ENCODE measurements at regions of chr3 and their contacts with region 1.

Region 1: DNA sequence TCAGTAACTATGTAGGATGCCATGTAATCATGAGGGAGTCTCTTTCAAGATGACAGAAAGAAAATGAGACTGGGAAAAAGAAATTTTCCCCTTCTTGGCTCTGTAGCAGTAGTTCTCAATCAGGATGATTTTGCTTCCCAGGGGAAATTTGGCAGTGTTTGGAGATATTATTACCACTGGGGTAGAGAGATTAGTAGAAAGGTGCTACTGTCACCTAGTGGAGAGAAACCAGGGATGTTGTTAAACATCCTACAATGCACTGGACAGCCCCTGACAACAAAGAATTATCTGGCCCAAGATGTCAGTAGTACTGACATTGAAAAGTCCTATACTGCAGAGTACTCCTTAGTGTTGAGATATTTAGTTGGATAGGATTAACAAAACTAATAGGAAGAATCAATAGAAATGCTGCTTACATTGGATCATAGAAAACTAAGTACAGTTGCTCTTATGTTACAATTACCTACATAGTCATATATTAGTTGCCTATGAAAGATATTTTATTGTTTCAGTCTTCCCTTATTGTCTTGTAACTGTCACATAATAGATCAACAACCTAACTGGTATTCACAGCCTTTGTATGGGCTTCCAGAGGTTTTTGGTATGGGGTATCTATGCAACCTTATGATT is 433.3 kb downstream of the RAP2B start:
- DNase-seq: peak; percentile 45
- H3K4me3 ChIP-seq: no peak overlapping the region
- H3K27ac ChIP-seq: no peak overlapping the region
- H3K4me1 ChIP-seq: peaks cover 18% of the 10 kb centered on the region
- H3K27me3 ChIP-seq: no peaks in the 10 kb centered on the region
- CTCF ChIP-seq: peak; percentile 78 to 96

Region 2: DNA sequence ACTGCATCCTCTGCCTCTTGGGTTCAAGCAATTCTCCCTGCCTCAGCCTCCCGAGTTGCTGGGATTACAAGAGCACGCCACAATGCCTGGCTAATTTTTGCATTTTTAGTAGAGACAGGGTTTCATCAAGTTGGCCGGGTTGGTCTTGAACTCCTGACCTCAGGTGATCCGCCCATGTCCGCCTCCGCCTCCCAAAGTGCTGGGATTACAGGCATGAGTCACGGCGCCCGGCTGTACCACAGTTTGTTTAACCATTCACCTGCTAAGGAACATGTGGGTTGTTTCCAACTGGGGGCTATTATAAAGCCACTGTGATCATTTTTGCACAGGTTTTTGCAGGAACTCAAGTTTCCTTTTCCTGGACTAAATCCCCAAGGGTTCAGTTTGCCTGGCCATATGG is 556.5 kb before region 1 on chr3:
- CTCF ChIA-PET with region 1: no interaction called
- dilution Hi-C with region 1: no loop called
- in situ Hi-C with region 1: loop called in 1 of 2 experiments (anchors 10 kb)
- intact Hi-C with region 1: loop called (anchors 1 kb)
- DNase-seq: peak; percentile 56
- H3K4me3 ChIP-seq: no peak overlapping the region
- H3K27ac ChIP-seq: no peak overlapping the region
- H3K4me1 ChIP-seq: peaks cover 18% of the 10 kb centered on the region
- H3K27me3 ChIP-seq: no peaks in the 10 kb centered on the region
- CTCF ChIP-seq: no peak

Region 3: DNA sequence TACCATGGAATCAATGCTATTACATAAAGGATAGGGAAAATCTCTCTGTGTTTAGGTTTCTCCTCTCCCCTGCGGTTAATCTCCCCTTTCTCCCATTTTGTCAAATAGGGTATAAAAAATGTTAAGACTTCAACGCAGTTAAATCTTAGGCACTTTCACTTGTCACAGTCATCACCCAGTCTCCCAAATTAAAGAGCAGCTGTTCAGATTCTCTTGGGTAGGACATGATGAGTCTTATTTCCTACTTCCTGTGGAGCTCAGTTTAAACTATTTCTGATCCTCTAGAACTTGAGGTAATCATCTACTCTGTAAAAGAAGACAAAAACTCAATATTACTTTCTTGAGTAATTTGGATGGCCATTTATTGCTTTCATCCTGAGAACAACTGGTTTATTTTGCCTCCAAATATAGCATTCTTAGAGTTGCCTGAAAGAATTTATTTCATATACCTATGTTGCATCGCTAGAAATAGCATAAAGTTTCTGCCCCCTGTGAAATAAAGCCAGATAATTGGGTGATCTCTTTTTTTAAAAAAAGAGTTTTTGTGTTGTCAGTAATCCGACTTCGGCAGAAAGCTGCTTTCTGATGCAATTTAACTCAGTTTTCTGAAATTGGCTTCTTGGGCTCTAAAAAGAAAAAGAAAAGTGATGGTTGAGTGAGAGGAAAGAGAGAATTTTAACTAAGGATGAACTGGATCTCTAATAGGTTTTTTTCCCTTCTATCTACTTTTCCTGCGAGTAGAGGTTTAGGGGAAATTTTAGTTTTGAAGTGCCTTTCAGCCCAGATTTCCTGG is 412.6 kb before region 1 on chr3:
- CTCF ChIA-PET with region 1: no interaction called
- dilution Hi-C with region 1: no loop called
- in situ Hi-C with region 1: loop called in 1 of 2 experiments (anchors 25 kb)
- intact Hi-C with region 1: no loop called
- DNase-seq: no peak
- H3K4me3 ChIP-seq: no peak overlapping the region
- H3K27ac ChIP-seq: no peak overlapping the region
- H3K4me1 ChIP-seq: no peaks in the 10 kb centered on the region
- H3K27me3 ChIP-seq: no peaks in the 10 kb centered on the region
- CTCF ChIP-seq: no peak

Region 4: DNA sequence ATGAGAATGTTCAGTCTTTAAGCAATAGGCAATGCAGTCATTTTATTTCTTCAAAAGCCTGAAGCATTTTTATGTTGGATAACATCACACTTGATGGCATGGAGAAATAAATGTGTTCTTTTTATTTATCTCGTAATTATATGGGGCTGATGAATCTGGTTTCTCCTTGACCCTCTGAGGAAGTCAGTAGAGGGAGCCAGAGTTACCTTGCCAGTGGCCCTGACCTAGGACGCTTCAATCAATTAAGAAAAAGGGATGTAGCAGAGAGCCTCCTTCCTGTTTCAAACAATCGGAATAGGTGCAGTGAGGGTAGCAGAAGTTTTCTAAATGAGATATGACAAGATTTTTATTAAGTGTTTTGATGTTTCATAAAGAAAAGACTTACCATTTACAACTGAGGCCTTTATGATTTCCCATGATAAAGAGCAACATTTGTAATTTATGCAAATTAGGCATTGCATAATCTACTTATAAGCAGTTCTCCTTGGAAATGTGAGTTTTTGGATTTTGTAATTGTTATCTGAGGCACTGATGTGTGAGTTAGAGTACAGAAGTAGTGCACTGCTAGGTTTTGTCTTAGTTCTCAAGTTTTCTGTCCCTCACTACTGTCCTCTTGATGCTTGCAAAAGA is 304.1 kb before region 1 on chr3:
- CTCF ChIA-PET with region 1: no interaction called
- dilution Hi-C with region 1: no loop called
- in situ Hi-C with region 1: no loop called
- intact Hi-C with region 1: loop called (anchors 1 kb)
- DNase-seq: peak; percentile 31
- H3K4me3 ChIP-seq: no peak overlapping the region
- H3K27ac ChIP-seq: no peak overlapping the region
- H3K4me1 ChIP-seq: peaks cover 34% of the 10 kb centered on the region
- H3K27me3 ChIP-seq: no peaks in the 10 kb centered on the region
- CTCF ChIP-seq: peak; percentile 35 to 70